Naive thymus-derived CD8-positive, alpha-beta T cell (primary cell): ENCODE measurements at regions of chr17 and their contacts with region 1.

Region 1: GRCh38 chr17:76204277-76204676 is 36.0 kb downstream of the RNF157 start:
- DNase-seq: no peak
- ATAC-seq: no peak
- H3K4me3 Mint-ChIP-seq: no peak overlapping the region
- H3K27ac Mint-ChIP-seq: peak overlapping the region; percentile 17 to 82 (median 52)
- H3K4me1 Mint-ChIP-seq: peaks cover 20 to 67% (median 64%) of the 10 kb centered on the region in 4 donors
- H3K27me3 Mint-ChIP-seq: no peaks in the 10 kb centered on the region

Region 2: DNA sequence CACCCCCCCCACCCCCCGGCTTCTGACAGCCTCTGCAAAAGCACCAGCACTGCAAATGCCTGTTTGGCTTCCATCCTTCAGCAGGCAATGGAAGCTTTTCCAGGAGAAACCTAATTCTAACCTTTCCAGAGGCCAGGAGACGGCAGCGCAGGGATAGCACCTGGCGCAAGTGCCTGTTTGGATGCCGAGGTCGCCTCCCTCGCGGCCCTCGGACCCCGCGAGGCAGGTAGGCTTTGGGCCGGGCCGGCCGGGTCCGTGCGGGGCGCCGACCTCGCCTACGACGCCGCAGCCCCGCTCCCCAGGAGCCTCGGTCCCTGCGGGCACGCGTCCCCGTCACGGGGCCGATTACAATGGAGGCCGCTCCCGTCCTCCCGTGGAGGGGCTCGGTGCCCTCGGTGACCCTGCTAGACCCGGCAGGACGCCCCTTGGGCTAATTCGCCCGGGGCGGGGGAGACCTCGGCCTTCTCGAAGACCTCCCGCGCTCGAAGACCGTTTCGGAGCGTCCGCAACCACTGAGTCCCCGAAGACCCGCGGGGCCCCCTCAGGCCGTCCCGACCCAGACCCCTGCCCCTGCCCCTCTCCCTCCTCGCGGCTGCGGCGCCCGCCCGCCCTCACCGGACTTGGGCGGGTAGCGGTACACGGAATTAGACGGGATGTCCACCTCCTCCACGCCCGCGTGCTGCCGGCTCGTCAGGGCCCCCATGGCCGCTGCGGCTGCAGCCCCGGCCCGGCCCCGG is 35.4 kb after region 1 on chr17:
- POLR2A ChIA-PET with region 1: interaction called, 11 read pairs
- DNase-seq: peak in 3 of 10 donors; percentile 10 to 25 (median 20)
- ATAC-seq: peak; percentile 16 to 17
- H3K4me3 Mint-ChIP-seq: peak overlapping the region; percentile 80 to 94 (median 87)
- H3K27ac Mint-ChIP-seq: peak overlapping the region; percentile 63 to 95 (median 92)
- H3K4me1 Mint-ChIP-seq: peaks cover 27 to 60% (median 55%) of the 10 kb centered on the region in 4 donors
- H3K27me3 Mint-ChIP-seq: peaks cover 0 to 9% (median 0%) of the 10 kb centered on the region in 5 donors

Region 3: DNA sequence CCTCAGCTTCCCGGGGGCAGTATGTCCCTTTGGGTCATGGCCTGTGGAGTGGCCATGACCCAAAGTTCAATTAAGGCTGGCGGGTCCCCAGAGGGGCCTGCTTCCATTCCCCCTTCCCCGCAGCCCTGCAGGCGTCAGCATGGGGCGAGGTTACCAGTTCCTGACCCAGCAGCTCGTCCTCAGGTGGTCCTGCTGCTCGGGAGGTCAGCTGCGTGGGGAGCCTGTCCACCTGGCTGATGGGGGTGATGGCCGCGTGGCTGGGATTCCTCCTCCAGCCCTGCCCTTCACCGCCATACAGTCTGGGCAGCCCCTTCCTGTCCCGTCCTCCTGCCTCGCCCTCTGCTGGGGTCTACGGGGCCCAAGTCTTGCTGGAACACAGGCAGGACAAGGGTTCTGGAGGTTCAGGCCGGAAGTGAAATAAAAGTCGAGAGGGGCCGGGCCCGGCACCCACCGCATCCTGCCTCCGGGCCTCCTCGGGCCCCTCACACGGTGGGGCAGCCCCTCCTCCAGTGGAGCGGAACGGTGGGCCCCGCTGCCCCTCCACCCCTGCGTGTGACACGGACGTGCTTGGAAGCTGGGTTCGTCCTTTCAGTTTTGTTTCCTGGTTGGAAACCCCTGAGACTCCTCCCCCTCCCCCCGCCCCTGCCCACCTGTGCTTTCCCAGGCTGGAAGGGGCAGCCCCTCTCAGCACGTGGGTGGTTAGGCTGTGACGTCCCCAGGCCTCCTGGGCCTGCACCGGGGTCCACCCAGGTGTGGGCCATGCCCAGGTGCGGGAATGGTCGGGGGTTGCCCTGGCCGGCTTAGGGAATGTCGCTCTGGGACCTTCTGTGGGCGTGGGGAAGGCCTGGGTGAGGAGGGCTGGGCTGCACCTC is 67.6 kb after region 1 on chr17:
- POLR2A ChIA-PET with region 1: interaction called, 11 read pairs
- DNase-seq: peak; percentile 52 to 85 (median 66)
- ATAC-seq: peak; percentile 39 to 50
- H3K4me3 Mint-ChIP-seq: peak overlapping the region; percentile 70 to 91 (median 82)
- H3K27ac Mint-ChIP-seq: peak overlapping the region; percentile 86 to 97 (median 94)
- H3K4me1 Mint-ChIP-seq: peaks cover 34 to 83% (median 74%) of the 10 kb centered on the region in 4 donors
- H3K27me3 Mint-ChIP-seq: no peaks in the 10 kb centered on the region